MCF 10A (cell line): ENCODE measurements at regions of chr17 and their contacts with region 1.

Region 1: DNA sequence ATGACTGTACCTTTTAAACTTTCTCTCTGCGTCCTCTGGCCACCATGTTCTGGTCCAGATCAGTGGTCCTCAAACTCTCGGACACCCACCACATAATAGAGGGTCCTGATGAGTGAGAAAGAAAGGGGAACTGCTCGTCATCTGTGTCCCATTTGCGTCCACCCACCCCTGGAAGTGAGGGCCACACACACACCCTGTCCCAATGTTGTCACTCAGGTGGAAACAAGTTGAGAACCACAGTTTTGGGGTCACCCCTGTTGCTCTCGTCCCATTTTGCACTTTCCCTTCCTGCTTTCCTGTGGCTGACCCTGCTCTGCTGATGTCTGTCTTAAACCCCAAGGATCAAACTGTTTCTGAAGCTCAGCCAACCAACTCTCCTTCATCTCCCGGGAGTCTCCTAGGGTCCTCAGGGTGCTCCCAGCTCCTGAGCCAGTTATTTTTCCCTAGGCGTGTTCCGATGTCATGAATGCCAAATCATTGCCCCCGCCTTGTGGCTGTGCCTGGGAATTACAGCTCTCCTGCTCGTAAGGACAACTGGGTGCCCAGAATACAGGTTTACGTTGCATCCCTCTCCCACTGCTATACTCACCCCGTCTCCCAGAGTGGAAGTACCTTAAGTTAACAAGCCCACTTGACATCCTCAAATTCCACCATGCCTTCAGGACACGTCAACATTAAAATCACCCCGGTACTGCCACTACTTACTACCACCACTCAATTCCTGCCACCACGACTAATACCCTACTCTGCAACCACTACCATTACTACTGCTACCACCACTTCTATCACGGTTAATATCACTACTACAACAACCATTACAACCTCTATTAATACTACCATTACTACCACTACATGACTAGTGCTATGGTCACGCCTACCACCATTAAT is 26.0 kb upstream of the HNF1B start:
- DNase-seq: peak; percentile 75
- H3K4me3 Mint-ChIP-seq: no peak overlapping the region
- H3K27ac Mint-ChIP-seq: no peak overlapping the region
- H3K4me1 Mint-ChIP-seq: peaks cover 18% of the 10 kb centered on the region
- H3K27me3 Mint-ChIP-seq: no peaks in the 10 kb centered on the region
- CTCF ChIP-seq: peak; percentile 87

Region 2: DNA sequence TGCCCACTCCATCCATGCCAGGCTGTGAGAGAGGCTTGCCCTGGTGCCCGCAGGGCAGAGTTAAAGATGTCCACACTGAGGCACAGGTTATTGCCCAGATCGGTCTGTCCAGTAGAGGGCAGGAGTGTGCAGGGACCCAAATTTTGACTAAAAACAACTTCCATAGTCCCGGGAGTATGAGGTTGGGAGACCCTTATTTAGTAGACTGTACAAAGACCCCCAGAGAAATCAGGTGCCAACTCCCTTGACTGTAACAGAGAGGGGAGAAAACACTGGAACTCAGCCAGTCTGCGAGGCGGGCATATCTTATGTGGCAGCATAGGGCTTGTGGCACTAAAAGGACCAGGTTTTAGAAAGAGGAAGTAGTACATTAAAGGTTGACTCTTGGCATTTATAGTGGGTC is 69.4 kb before region 1 on chr17:
- CTCF ChIA-PET with region 1: interaction called, 18 read pairs
- POLR2A ChIA-PET with region 1: interaction called, 6 read pairs
- intact Hi-C with region 1: loop called (anchors 1 kb)
- DNase-seq: peak; percentile 60
- H3K4me3 Mint-ChIP-seq: no peak overlapping the region
- H3K27ac Mint-ChIP-seq: no peak overlapping the region
- H3K4me1 Mint-ChIP-seq: peaks cover 20% of the 10 kb centered on the region
- H3K27me3 Mint-ChIP-seq: no peaks in the 10 kb centered on the region
- CTCF ChIP-seq: peak; percentile 52

Region 3: GRCh38 chr17:37717627-37718323 is 53.1 kb before region 1 on chr17:
- CTCF ChIA-PET with region 1: no interaction called
- POLR2A ChIA-PET with region 1: no interaction called
- intact Hi-C with region 1: loop called (anchors 5 kb)
- DNase-seq: no peak
- H3K4me3 Mint-ChIP-seq: no peak overlapping the region
- H3K27ac Mint-ChIP-seq: no peak overlapping the region
- H3K4me1 Mint-ChIP-seq: peaks cover 14% of the 10 kb centered on the region
- H3K27me3 Mint-ChIP-seq: peaks cover 16% of the 10 kb centered on the region
- CTCF ChIP-seq: no peak

Region 4: GRCh38 chr17:37791447-37792399 is 20.8 kb after region 1 on chr17:
- CTCF ChIA-PET with region 1: interaction called, 11 read pairs
- POLR2A ChIA-PET with region 1: interaction called, 7 read pairs
- intact Hi-C with region 1: no loop called
- DNase-seq: peak; percentile 31
- H3K4me3 Mint-ChIP-seq: no peak overlapping the region
- H3K27ac Mint-ChIP-seq: no peak overlapping the region
- H3K4me1 Mint-ChIP-seq: no peaks in the 10 kb centered on the region
- H3K27me3 Mint-ChIP-seq: peaks cover 11% of the 10 kb centered on the region
- CTCF ChIP-seq: peak; percentile 45

Region 5: DNA sequence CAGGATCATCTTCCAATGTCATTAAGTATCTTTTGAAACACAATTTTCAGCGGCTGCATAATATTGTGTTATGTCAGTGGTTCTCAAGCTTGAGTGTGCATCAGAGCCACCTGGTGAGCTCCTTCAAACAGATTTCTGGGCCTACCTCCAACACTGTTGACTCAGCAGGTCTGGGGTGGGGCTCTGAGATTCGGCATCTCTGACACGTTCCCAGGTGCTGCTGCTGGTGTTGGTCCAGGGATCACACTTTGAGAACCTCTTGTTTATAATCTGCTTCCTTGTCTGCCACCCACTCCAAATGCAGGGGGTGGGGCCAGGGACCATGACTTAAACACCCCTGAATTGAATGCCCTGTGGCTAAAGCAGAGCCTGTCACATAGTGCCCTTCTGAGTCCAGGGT is 47.8 kb after region 1 on chr17:
- CTCF ChIA-PET with region 1: interaction called, 43 read pairs
- POLR2A ChIA-PET with region 1: no interaction called
- intact Hi-C with region 1: loop called (anchors 2 kb)
- DNase-seq: peak; percentile 88
- H3K4me3 Mint-ChIP-seq: no peak overlapping the region
- H3K27ac Mint-ChIP-seq: no peak overlapping the region
- H3K4me1 Mint-ChIP-seq: peaks cover 10% of the 10 kb centered on the region
- H3K27me3 Mint-ChIP-seq: no peaks in the 10 kb centered on the region
- CTCF ChIP-seq: no peak

Region 6: DNA sequence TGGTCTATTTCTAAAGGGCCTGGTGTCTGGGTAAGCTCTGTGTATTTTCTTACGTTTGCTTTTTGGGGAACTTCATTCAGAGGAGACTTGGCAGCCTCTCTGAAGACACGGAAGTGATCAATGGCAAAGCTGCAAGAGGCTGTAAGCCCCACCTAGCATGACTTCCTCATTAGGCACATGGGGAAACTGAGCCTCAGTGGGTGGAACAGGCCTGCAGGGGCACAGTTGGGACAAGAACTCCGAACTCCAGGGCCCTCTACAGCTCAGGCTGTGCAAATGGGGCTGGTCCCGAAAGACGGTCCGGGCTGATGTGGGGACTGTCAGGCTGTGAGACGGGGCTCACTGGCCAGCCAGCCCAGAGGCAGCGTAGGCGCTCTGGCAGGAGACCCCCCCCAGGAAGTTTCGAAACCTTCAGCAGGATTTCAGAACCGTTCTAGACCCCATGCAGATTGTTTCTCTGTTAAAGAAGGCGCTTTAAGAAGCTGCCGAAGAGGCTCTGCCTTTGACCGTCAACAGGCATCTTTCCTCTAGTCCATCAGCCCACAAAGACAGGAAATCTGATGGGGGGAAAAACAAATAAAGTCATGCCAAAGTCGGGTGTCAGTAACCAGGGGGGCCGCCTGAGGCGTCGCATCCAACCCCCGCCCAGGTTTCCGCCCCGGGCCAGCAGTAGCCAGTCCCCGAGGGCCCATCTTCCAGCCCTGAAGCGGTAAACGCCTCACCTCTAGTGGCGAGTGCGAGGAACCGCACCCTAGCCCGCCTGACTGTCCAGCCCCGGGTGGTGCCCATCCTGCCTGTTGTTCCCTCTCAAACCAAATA is 73.5 kb after region 1 on chr17:
- CTCF ChIA-PET with region 1: no interaction called
- POLR2A ChIA-PET with region 1: no interaction called
- intact Hi-C with region 1: no loop called
- DNase-seq: peak; percentile 56
- H3K4me3 Mint-ChIP-seq: no peak overlapping the region
- H3K27ac Mint-ChIP-seq: no peak overlapping the region
- H3K4me1 Mint-ChIP-seq: peaks cover 4% of the 10 kb centered on the region
- H3K27me3 Mint-ChIP-seq: peaks cover 16% of the 10 kb centered on the region
- CTCF ChIP-seq: peak; percentile 87